Esophagus muscularis mucosa (tissue), 4 donors: ENCODE measurements at regions of chr5 and their contacts with region 1.

Region 1: GRCh38 chr5:109329333-109330237 is 80.2 kb downstream of the PJA2 start:
- DNase-seq: no peak
- H3K4me3 ChIP-seq: no peak overlapping the region
- H3K27ac ChIP-seq: peak overlapping the region; percentile 76 to 83 (median 80)
- H3K4me1 ChIP-seq: peaks cover 5 to 77% (median 49%) of the 10 kb centered on the region in 4 donors
- H3K27me3 ChIP-seq: no peaks in the 10 kb centered on the region
- CTCF ChIP-seq: no peak
- EP300 ChIP-seq: no peak
- POLR2A ChIP-seq: no peak

Region 2: DNA sequence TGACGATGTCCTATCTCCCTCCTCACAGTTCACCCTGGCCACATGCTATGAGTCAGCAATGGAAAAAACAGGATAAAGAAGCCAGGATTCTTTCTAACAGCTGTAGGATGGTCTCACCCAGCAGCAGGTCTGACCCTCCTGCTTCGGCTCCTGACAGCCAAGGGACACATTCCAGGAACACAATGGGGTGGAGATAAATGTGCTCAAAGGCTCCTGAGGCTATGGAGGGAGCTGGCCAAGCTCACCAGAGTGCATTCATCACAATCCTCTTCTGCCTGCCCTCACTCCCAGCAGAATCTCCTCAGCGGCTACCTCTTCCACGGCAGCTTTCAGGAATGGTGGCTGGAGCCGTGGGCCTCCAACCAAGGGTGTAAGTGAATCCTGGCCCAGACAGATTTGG is 90.1 kb before region 1 on chr5:
- intact Hi-C with region 1: no loop called
- DNase-seq: no peak
- H3K4me3 ChIP-seq: no peak overlapping the region
- H3K27ac ChIP-seq: no peak overlapping the region
- H3K4me1 ChIP-seq: no peaks in the 10 kb centered on the region
- H3K27me3 ChIP-seq: no peaks in the 10 kb centered on the region
- CTCF ChIP-seq: no peak
- EP300 ChIP-seq: no peak
- POLR2A ChIP-seq: no peak

Region 3: GRCh38 chr5:109409844-109410388 is 80.3 kb after region 1 on chr5 and contains the start of gene PJA2:
- intact Hi-C with region 1: loop called (anchors 5 kb)
- DNase-seq: peak; percentile 100
- H3K4me3 ChIP-seq: peak within 1 kb of the TSS; percentile 88 to 94 (median 90)
- H3K27ac ChIP-seq: peak within 1 kb of the TSS; percentile 98 to 99 (median 98)
- H3K4me1 ChIP-seq: peaks cover 18 to 60% (median 56%) of the 10 kb centered on the region in 4 donors
- H3K27me3 ChIP-seq: no peaks in the 10 kb centered on the region
- CTCF ChIP-seq: peak in 2 of 3 experiments; percentile 14 to 53
- EP300 ChIP-seq: no peak
- POLR2A ChIP-seq: peak; percentile 75
- total RNA-seq, gene PJA2: 133 to 211 (median 170) TPM

Region 4: DNA sequence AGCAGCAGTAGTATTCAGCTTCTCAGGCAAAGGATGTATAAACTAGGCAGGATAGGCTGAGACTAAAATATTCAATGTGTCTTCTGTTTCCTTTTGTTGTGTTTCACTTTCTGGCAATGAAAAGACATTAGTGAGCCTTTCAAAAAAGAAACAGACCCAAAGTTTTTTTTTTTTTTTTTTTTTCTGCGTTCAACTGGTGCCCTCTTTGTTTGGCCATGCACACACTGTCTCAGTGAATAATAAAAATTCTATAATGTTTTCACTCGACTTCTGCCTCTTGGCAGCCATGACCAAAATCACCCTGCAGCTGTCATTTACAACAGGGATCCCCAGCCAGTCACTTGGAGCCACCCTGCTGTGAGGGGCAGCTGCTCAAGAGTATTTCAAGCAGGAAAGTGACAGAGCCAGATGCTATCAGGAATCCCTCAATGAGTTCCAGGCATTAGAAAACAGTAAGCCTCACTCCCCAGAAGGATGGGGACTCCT is 316.2 kb after region 1 on chr5:
- intact Hi-C with region 1: no loop called
- DNase-seq: no peak
- H3K4me3 ChIP-seq: no peak overlapping the region
- H3K27ac ChIP-seq: peak overlapping the region in 1 of 4 donors; percentile 24
- H3K4me1 ChIP-seq: peaks cover 0 to 15% (median 12%) of the 10 kb centered on the region in 4 donors
- H3K27me3 ChIP-seq: no peaks in the 10 kb centered on the region
- CTCF ChIP-seq: no peak
- EP300 ChIP-seq: no peak
- POLR2A ChIP-seq: no peak